MCF 10A (cell line): ENCODE measurements at regions of chr17 and their contacts with region 1.

Region 1: DNA sequence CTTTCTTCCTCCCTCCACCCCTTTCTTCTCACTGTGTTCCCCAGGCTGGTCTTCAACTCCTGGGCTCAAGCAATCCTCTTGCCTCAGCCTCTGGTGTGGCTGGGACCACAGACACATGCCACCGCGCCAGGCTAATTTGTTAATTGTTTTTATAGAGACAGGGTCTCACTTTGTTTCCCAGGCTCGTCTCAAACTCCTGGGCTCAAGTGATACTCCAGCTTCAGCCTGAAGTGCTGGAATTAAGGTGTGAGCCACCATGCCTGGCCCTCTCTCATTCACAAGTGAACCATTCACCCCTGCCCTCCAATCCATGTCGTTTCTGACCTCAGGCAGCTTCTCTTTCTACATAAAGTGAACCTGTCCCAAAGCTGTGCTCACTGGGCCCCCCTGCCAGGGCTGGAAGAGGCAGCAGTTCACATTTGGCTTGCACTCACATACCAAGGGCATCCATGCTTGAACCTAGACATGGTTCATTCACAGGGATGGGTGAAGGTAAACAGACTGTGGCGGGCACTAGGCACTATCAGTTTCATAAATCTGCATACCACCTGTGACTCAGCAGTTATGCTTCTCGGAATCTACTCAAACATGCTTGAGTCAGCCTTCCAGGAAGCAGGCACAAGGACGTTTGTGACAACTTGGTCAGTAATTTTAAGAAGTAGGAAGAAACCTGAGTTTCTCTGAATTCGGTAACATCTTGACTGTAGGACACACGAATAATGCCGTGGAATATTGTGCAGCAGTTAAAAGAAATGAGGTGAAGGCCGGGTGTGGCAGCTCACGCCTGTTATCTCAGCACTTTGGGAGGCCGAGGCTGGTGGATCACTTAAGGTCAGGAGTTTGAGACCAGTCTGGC is 6.0 kb upstream of the RNF213 start:
- DNase-seq: peak; percentile 92
- H3K4me3 Mint-ChIP-seq: peak overlapping the region; percentile 60
- H3K27ac Mint-ChIP-seq: peak overlapping the region; percentile 95
- H3K4me1 Mint-ChIP-seq: peaks cover 17% of the 10 kb centered on the region
- H3K27me3 Mint-ChIP-seq: no peaks in the 10 kb centered on the region
- CTCF ChIP-seq: no peak

Region 2: GRCh38 chr17:80082403-80083135 is 172.1 kb before region 1 on chr17:
- CTCF ChIA-PET with region 1: interaction called, 8 read pairs
- POLR2A ChIA-PET with region 1: no interaction called
- intact Hi-C with region 1: loop called (anchors 5 kb)
- DNase-seq: peak; percentile 72
- H3K4me3 Mint-ChIP-seq: no peak overlapping the region
- H3K27ac Mint-ChIP-seq: no peak overlapping the region
- H3K4me1 Mint-ChIP-seq: no peaks in the 10 kb centered on the region
- H3K27me3 Mint-ChIP-seq: peaks cover 21% of the 10 kb centered on the region
- CTCF ChIP-seq: peak; percentile 65

Region 3: GRCh38 chr17:80147035-80147836 is 107.4 kb before region 1 on chr17 and contains the start of gene EIF4A3:
- CTCF ChIA-PET with region 1: interaction called, 3 read pairs
- POLR2A ChIA-PET with region 1: interaction called, 7 read pairs
- intact Hi-C with region 1: loop called (anchors 5 kb)
- DNase-seq: peak; percentile 99
- H3K4me3 Mint-ChIP-seq: peak within 1 kb of the TSS; percentile 84
- H3K27ac Mint-ChIP-seq: peak within 1 kb of the TSS; percentile 62
- H3K4me1 Mint-ChIP-seq: peaks cover 17% of the 10 kb centered on the region
- H3K27me3 Mint-ChIP-seq: no peaks in the 10 kb centered on the region
- CTCF ChIP-seq: no peak
- total RNA-seq, gene EIF4A3: 87.0 and 97.7 TPM in 2 replicates

Region 4: DNA sequence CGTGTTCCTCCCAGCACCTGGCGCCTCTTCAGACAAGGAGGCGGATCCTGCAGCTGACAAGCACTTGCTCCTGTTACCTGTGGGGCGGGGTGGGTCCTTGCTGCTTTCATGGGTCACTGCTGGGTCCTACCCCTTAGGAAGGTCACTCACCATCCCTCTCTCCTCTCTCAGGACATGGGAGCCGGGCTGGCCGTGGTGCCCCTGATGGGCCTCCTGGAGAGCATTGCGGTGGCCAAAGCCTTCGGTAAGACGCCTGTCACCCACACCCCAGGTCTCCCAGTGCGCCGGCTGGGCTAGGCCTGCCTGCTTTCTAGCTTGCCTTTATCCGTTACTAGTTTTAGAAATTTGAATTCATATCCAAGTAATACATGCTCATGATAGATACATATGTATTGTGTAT is 17.3 kb before region 1 on chr17:
- CTCF ChIA-PET with region 1: interaction called, 10 read pairs
- POLR2A ChIA-PET with region 1: interaction called, 3 read pairs
- intact Hi-C with region 1: no loop called
- DNase-seq: no peak
- H3K4me3 Mint-ChIP-seq: no peak overlapping the region
- H3K27ac Mint-ChIP-seq: no peak overlapping the region
- H3K4me1 Mint-ChIP-seq: no peaks in the 10 kb centered on the region
- H3K27me3 Mint-ChIP-seq: no peaks in the 10 kb centered on the region
- CTCF ChIP-seq: no peak

Region 5: GRCh38 chr17:80352991-80353665 is 98.5 kb after region 1 on chr17:
- CTCF ChIA-PET with region 1: no interaction called
- POLR2A ChIA-PET with region 1: no interaction called
- intact Hi-C with region 1: no loop called
- DNase-seq: no peak
- H3K4me3 Mint-ChIP-seq: no peak overlapping the region
- H3K27ac Mint-ChIP-seq: no peak overlapping the region
- H3K4me1 Mint-ChIP-seq: no peaks in the 10 kb centered on the region
- H3K27me3 Mint-ChIP-seq: no peaks in the 10 kb centered on the region
- CTCF ChIP-seq: no peak

Region 6: GRCh38 chr17:80389011-80389995 is 134.7 kb after region 1 on chr17:
- CTCF ChIA-PET with region 1: no interaction called
- POLR2A ChIA-PET with region 1: no interaction called
- intact Hi-C with region 1: no loop called
- DNase-seq: no peak
- H3K4me3 Mint-ChIP-seq: no peak overlapping the region
- H3K27ac Mint-ChIP-seq: no peak overlapping the region
- H3K4me1 Mint-ChIP-seq: no peaks in the 10 kb centered on the region
- H3K27me3 Mint-ChIP-seq: no peaks in the 10 kb centered on the region
- CTCF ChIP-seq: no peak